ENCODE measurements at regions of chr12 and their contacts with region 1.

Region 1: GRCh38 chr12:113965951-113966797 is at the start of gene RBM19:
- DNase-seq: peak; percentile 92
- H3K4me3 ChIP-seq: peak within 1 kb of the TSS; percentile 79 to 88 (median 85)
- H3K27ac ChIP-seq: peak within 1 kb of the TSS; percentile 58
- H3K4me1 ChIP-seq: peaks cover 12% of the 10 kb centered on the region
- H3K27me3 ChIP-seq: no peaks in the 10 kb centered on the region
- CTCF ChIP-seq: peak; percentile 78 to 90
- total RNA-seq, gene RBM19: 24.0 to 37.3 TPM

Region 2: GRCh38 chr12:114476159-114476558 is 510.0 kb after region 1 on chr12:
- CTCF ChIA-PET with region 1: no interaction called
- dilution Hi-C with region 1: no loop called
- in situ Hi-C with region 1: no loop called
- intact Hi-C with region 1: loop called (anchors 5 kb)
- DNase-seq: peak; percentile 1
- H3K4me3 ChIP-seq: no peak overlapping the region
- H3K27ac ChIP-seq: no peak overlapping the region
- H3K4me1 ChIP-seq: no peaks in the 10 kb centered on the region
- H3K27me3 ChIP-seq: peaks cover 18% of the 10 kb centered on the region
- CTCF ChIP-seq: peak; percentile 17 to 36

Region 3: DNA sequence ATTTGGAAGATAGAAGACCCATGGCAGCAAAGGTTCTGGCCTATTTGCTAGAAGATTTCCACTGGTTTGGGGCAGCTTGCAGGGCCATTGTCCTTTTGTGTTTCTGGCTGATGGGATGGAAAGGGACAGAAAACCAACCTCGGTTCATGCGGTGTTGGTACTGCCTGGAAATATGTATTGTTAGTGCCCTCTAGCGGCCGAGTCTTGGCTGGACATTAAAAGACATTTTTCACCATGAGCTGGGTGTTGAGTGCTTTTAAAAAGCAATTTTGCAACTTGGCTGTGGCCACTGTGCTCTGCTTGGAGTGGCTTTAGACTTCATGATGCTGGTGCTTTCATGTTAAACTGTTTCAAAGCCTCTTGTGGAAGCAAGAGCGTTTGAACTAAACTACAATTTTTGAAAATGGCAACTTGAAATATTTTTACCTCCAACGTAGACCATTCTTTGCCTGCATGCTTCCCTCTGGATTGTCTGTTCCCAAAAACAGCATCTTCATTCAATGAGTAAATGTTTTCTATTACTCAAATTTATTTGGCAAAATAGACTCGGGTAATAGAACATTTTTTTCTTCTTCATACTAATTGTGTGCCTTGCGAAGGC is 542.5 kb after region 1 on chr12:
- CTCF ChIA-PET with region 1: no interaction called
- dilution Hi-C with region 1: no loop called
- in situ Hi-C with region 1: no loop called
- intact Hi-C with region 1: loop called (anchors 1 kb)
- DNase-seq: peak; percentile 49
- H3K4me3 ChIP-seq: no peak overlapping the region
- H3K27ac ChIP-seq: no peak overlapping the region
- H3K4me1 ChIP-seq: no peaks in the 10 kb centered on the region
- H3K27me3 ChIP-seq: no peaks in the 10 kb centered on the region
- CTCF ChIP-seq: peak; percentile 77 to 79

Measured in mammary epithelial cell (primary cell).